ENCODE measurements at regions of chr1 and their contacts with region 1.

Region 1: DNA sequence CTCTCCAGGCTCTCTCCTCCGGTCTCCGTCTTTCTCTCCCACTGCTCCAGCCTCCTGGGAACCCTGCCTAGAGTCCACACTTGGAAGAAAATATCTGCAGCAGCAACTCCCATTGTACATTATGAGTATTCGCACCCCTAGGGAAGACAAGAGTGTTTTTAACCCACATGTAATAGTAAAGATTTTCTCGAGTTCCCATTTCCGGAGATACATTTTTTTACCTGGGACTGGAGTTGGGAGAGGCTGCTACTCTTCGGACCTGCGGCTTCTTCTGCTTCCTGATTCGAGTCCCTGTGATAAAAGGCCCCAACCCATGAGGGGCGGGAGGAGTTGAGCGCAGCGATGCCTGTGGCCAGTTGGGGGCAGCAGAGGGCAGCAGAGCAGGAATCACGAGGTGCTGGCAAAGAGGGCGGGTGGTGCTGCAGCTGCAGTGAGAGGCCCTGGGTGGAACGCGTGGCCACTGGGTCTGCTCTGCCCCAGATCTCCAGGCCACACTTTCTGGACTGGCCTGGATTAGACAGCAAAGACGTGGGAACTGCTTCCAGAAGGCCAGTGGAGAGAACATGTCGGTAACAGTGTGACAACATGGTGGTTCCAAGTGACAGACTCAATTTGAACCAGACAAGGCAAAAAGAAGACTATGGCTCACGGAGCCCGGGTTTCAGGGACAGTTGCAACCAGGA is 221.0 kb upstream of the CSF3R start:
- DNase-seq: peak; percentile 86
- ATAC-seq: peak; percentile 83

Region 2: DNA sequence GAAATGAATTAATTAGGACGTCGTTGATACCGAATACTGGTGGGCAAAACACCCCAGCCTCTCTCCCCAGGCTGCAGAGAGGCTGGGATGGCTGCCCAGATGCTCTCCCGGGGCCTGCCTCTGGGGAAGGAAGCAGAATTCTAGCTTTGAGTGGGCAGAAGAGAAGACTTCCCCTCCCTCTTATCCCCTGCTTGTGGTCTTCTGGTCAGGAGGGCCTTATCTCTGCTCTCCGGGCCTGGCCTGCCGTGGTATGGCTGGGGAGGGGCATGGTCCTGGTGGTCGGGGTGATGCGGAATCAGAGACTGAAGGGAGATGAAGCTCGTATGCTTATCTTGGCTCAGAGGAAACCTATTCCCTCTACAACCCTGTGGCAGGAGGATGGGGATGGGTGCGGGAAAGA is 211.2 kb before region 1 on chr1:
- intact Hi-C with region 1: no loop called
- DNase-seq: no peak
- ATAC-seq: no peak

Region 3: DNA sequence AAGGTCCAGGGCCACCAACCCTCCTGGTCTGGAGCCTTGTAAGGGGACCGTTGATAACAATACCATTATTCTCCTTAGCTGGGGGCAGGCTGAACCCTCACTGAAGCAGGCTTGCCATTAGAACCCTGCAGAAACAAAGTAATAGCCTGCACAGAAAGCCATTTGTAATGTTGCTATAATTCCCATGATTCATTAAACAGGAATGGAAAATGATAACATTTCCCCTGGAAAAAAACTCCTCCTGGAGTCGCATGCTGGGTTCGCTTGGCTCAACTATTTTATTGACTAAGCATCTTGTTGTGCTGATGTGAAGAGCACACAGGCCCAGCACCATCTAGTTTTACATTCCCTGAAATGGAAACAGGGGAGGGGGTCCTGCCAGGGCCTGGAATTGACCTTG is 65.4 kb before region 1 on chr1:
- intact Hi-C with region 1: no loop called
- DNase-seq: no peak
- ATAC-seq: no peak

Region 4: GRCh38 chr1:37038227-37039076 is 334.8 kb after region 1 on chr1:
- intact Hi-C with region 1: loop called (anchors 2 kb)
- DNase-seq: no peak
- ATAC-seq: peak; percentile 69

Region 5: DNA sequence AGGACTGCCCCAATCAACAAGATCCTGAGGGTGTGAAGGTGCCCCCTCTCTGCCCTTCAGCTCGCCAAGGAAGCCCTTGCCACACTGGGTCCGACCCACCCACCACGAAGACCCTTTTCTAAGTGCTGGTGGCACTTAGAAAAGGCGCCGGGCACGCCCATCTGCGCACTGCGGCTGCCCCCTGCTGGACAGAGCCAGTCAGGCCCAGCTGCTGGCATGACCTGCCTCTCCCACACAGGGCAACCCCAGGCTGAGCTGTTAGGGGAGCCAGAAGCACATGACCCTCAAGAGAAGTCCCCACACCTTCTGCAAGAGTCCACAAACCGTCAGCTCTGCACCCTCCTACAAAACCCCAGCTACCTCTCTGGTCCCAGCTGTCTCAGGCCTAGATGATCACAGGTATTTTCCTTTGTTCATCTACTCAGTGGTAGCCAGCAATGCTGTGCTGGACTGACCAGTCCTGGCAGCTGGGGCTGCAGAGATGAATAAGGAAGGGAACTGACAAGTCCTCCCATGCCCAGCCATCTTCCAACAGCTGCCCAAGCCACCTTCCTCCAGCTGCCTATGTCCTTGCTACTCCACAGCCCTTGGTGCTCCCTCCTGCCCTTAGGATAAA is 730.7 kb after region 1 on chr1:
- intact Hi-C with region 1: loop called (anchors 5 kb)
- DNase-seq: peak; percentile 87
- ATAC-seq: peak; percentile 63

Measured in Right ventricle myocardium inferior (tissue), 1 donor.